Heart right ventricle (tissue), 16 donors: ENCODE measurements at regions of chr1 and their contacts with region 1.

Region 1: DNA sequence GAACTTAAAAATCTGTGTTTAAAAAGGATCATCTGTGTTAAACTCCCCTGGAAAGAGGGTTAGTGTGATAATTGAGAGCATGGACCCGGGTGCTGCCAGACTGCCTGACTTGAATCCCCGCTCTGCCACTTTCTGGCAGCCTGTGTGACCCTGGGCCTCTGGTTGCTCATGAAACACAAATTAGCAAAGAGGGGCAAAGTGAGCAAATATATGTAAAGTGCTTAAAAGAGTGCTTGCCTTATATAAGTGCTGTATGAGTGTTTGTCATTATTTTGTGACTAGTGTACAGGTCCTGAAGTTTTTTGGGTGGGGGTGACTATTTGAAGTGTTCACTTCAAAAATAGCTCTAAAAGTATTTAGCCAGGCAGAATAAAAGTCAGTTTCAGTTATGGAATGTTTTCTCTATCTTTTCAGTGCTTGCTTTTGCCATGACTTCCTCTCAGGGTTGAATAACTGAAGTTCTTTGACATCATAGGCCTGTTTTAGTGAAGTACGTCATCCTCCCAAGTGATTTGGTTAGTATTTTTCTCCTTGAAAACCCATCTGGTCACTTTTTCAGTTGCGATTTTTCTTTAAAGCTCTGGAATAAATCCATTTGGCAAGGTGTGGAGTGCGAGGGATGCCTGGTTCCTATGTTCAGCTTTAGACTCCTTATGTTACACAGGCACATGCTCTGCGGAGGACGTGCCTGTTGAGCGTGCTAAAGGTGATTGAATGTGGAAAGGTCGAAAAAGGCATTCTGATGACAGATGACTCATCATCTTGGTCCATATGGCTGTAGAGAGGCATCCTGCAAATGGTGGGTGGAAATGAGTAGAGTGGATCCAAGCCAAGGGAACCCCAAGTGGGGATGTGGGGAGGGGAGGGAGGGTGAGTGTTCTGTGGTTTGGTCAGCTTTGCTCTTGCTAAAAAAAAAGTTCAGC is 47.8 kb downstream of the AK4 start:
- DNase-seq: peak in 1 of 2 donors; percentile 37
- ATAC-seq: peak; percentile 61 to 87 (median 78)
- H3K4me3 ChIP-seq: no peak overlapping the region
- H3K27ac ChIP-seq: peak overlapping the region in 9 of 10 donors; percentile 4 to 90 (median 79)
- H3K4me1 ChIP-seq: peaks cover 4 to 37% (median 26%) of the 10 kb centered on the region in 9 donors
- H3K27me3 ChIP-seq: no peaks in the 10 kb centered on the region
- CTCF ChIP-seq: no peak

Region 2: GRCh38 chr1:64877151-64877550 is 318.6 kb before region 1 on chr1:
- intact Hi-C with region 1: loop called in 1 of 10 experiments (anchors 10 kb)
- DNase-seq: no peak
- ATAC-seq: no peak
- H3K4me3 ChIP-seq: no peak overlapping the region
- H3K27ac ChIP-seq: peak overlapping the region in 1 of 10 donors; percentile 22
- H3K4me1 ChIP-seq: peaks cover 0 to 57% (median 25%) of the 10 kb centered on the region in 9 donors
- H3K27me3 ChIP-seq: no peaks in the 10 kb centered on the region
- CTCF ChIP-seq: no peak

Region 3: GRCh38 chr1:65075123-65075976 is 120.4 kb before region 1 on chr1:
- intact Hi-C with region 1: no loop called
- DNase-seq: peak in 1 of 2 donors; percentile 68
- ATAC-seq: peak; percentile 50 to 84 (median 80)
- H3K4me3 ChIP-seq: no peak overlapping the region
- H3K27ac ChIP-seq: no peak overlapping the region
- H3K4me1 ChIP-seq: no peaks in the 10 kb centered on the region
- H3K27me3 ChIP-seq: no peaks in the 10 kb centered on the region
- CTCF ChIP-seq: peak; percentile 56 to 86 (median 78)

Region 4: GRCh38 chr1:65141918-65142317 is 53.8 kb before region 1 on chr1:
- intact Hi-C with region 1: loop called in 2 of 10 experiments (anchors 2 to 10 kb)
- DNase-seq: no peak
- ATAC-seq: no peak
- H3K4me3 ChIP-seq: no peak overlapping the region
- H3K27ac ChIP-seq: no peak overlapping the region
- H3K4me1 ChIP-seq: peaks cover 0 to 17% (median 3%) of the 10 kb centered on the region in 9 donors
- H3K27me3 ChIP-seq: peaks cover 0 to 13% (median 0%) of the 10 kb centered on the region in 7 donors
- CTCF ChIP-seq: no peak